PC-3 (cell line): ENCODE measurements at regions of chr19 and their contacts with region 1.

Region 1: DNA sequence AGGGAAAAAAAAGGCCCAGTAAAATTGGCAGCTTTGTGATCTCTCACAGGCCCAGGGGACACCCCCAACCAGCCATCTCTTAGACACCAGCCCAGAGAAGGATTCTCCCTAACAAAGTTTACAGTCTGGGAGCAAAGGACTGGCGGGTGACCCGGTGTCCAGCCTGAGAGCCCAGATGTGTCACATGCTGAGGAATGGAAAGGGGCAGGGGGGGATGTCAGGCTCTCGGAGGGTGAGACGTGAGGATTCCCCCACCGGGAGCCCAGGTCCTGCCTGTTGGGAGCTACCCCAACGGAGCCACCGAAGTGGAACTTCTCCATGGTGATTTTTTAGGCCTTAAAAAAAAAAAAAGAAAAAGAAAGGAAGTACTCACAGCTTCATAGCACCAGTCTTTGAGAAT is 4.8 kb upstream of the CTXN1 start:
- DNase-seq: no peak
- ATAC-seq: no peak
- H3K4me3 ChIP-seq: no peak overlapping the region
- H3K27ac ChIP-seq: 0 out of 2 replicates have a peak overlapping the region, but pooled peaks have one; percentile 86
- H3K4me1 ChIP-seq: peaks cover 39% of the 10 kb centered on the region
- H3K27me3 ChIP-seq: no peaks in the 10 kb centered on the region
- CTCF ChIP-seq: no peak

Region 2: DNA sequence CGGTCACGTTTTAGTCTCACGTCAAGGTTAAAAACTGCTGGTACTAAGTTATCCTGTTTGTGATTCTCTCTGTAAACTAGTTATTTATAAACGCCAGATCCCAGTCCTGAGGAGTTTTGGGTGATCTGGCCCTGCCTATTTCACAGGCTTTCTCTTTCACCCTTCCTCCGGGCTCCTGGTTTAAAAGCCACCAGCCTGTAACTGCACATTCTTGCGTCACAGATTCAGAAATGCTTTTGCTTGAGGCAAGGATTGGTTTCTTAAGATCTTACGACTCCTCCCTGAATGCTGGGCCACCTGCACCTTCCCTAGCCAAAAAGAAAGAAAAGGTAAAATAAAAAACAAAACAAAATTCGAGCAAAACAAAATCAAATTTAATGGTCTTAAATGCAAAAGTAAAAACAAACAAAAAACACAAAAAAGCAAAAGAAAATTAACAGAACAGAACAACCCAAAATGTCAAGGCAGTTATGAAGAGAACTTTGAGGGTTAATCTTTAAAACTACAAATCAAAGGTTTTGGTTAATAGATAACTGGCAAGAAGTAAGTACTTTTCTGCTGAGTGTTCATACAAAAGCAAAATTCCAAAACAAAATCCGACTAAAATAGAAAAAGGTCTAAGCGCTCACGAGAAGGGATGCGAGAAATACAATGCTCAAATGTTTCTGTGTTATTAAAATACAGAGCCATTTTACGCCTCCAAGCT is 31.3 kb after region 1 on chr19:
- CTCF ChIA-PET with region 1: no interaction called
- POLR2A ChIA-PET with region 1: no interaction called
- intact Hi-C with region 1: no loop called
- DNase-seq: no peak
- ATAC-seq: no peak
- H3K4me3 ChIP-seq: no peak overlapping the region
- H3K27ac ChIP-seq: no peak overlapping the region
- H3K4me1 ChIP-seq: peaks cover 8% of the 10 kb centered on the region; the same call in 1 of the 2 replicates
- H3K27me3 ChIP-seq: no peaks in the 10 kb centered on the region
- CTCF ChIP-seq: no peak

Region 3: DNA sequence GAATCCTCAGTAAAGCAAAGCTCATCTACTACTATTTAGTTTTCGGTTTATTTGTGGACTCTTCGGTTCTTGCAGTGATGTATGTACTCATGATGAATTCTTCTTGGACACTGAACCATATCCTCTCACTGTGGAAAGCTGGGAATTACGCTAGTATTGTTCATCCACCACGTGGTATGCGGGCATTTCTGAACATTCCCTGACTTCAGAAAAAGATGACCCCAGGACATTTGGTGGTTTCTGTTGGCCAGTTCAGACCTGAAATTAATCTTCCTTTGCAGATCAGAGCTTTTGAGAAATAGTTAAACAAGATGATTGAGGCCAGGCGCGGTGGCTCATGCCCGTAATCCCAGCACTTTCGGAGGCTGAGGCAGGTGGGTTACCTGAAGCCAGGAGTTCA is 243.9 kb after region 1 on chr19:
- CTCF ChIA-PET with region 1: no interaction called
- POLR2A ChIA-PET with region 1: interaction called, 23 read pairs
- intact Hi-C with region 1: no loop called
- DNase-seq: peak; percentile 77
- ATAC-seq: no peak
- H3K4me3 ChIP-seq: no peak overlapping the region
- H3K27ac ChIP-seq: 0 out of 2 replicates have a peak overlapping the region, but pooled peaks have one; percentile 27
- H3K4me1 ChIP-seq: no peaks in the 10 kb centered on the region
- H3K27me3 ChIP-seq: no peaks in the 10 kb centered on the region
- CTCF ChIP-seq: no peak

Region 4: DNA sequence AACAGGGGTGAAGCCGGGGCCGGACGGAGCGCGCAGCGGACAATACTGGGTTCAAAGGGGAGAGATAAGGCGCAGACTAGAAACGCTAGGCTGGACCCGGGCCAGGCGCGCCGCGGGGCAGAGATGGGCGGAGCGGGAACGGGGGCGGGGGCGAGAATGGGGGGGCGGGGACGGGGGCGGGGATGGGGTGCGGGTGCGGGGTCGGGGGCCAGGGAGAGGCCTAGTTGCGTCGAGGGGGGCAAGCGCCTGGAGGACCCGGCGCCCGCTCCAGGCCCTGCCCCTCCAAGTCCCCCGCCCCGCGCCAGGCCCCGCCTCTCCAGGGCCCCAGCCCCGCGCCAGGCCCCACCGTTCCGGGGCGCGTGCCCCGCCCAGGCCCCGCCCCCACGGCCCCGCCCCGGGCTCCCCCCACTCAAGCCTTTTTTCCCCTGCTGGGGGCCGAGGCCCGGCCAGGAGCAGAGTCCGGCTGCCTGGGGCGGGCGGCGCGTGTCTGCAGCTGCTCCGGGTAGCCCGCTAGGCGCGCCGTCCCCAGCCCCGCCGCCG is 278.2 kb after region 1 on chr19 and contains the start of gene CERS4:
- CTCF ChIA-PET with region 1: no interaction called
- POLR2A ChIA-PET with region 1: interaction called, 13 read pairs
- intact Hi-C with region 1: no loop called
- DNase-seq: peak; percentile 52
- ATAC-seq: peak; percentile 56
- H3K4me3 ChIP-seq: peak within 1 kb of the TSS; percentile 82
- H3K27ac ChIP-seq: no peak within 1 kb of the TSS
- H3K4me1 ChIP-seq: peaks cover 25% of the 10 kb centered on the region
- H3K27me3 ChIP-seq: 0 out of 2 replicates have a peak, but pooled peaks cover 2% of the 10 kb centered on the region
- CTCF ChIP-seq: no peak
- total RNA-seq, gene CERS4: 39.3 and 43.9 TPM in 2 replicates